Astrocyte of the cerebellum (primary cell): ENCODE measurements at regions of chr3 and their contacts with region 1.

Region 1: DNA sequence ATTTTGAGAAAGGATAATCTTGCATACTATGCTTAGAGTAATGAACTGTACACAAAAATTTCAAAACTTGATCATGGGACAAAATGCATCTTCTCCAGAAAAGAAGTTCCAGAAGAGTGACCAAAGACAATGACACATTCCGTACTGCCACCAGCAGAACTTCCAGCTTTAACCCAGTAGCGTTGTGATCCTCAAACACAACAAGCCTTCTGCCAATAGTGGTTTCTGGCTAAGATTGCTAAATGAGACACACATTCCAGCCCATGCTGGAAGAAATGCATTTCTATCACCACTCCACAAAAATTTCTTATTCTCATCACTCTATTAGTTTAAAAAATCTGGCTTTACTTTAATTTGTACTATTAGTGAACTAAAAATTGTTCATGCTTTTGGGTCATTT is 334.9 kb downstream of the TBC1D5 start:
- DNase-seq: no peak
- H3K4me3 ChIP-seq: no peak overlapping the region
- CTCF ChIP-seq: no peak

Region 2: DNA sequence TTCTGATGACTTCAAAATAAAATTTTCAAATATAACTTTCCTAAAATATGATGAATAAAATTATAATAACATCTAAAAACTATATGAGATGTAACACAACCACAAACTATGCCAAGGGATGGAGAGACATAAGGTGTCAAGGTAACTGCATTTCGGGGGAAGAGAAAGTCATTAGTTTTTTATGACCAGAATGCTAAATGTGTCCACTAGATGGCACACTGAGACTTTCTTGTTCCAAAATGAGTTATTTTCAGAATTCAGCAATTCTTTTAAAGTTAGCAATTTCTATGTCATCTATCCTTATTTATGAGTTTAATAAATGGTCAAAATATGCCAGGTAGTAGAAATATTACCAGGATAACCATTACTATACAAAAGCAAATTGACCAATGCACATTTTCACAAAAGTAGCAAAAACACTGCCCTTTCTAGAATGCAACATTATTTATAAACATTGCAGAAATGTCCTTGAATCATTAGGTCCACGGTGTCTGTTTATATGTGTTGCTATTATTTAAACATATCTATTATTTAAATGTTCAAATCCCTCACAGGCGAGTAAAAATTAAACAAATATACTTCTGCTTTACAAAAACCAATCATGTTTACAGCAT is 148.6 kb before region 1 on chr3:
- in situ Hi-C with region 1: loop called (anchors 5 kb)
- DNase-seq: peak; percentile 18
- H3K4me3 ChIP-seq: no peak overlapping the region
- CTCF ChIP-seq: peak; percentile 59